MCF 10A (cell line): ENCODE measurements at regions of chr12 and their contacts with region 1.

Region 1: DNA sequence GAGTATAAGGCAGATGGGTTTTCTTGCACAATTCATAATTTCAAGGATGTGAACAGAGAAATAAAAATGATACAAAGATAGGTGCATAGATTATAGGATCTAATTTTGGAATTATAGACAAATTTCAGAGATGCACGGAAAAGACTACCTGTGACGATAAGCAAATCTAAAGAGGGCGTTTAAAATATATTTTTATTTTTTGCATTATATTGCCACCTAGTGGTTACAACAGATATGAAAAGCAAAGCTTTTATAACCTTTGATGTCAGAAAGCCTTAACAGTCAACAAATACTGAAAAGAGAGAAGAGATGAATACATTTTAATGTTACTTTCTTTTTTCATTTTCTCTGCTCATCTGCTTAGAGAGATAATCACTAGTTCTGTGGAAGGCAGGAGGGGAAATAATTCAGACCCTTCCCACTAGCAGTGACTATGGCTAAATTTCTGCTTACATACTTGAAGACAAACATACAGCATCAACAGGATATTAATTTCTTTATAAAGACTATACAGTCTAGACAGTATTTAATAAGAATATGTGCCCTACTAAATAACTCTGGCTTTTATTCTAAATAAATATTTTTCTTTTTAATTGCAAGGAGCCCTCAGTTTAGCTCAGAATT is 46.3 kb downstream of the NTS start:
- DNase-seq: peak; percentile 39
- H3K4me3 Mint-ChIP-seq: no peak overlapping the region
- H3K27ac Mint-ChIP-seq: no peak overlapping the region
- H3K4me1 Mint-ChIP-seq: no peaks in the 10 kb centered on the region
- H3K27me3 Mint-ChIP-seq: no peaks in the 10 kb centered on the region
- CTCF ChIP-seq: peak; percentile 50

Region 2: DNA sequence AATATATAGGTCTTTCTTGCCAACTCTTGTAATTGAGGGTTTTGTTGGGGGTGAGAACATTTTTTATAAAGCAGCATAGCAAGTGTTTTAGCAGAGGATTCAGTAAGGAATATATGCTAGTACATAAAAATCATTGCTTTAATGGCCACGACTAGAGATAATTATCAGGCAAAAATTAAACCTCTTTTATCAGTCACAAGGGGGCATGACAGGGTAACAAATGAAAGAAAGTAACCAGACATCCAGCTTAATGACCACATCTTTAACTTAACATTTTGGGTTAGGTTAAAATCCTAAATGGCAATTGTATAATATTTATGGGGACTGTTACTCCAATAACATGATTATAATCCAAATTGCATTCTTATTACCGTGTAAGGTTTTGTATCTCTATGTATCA is 764.6 kb before region 1 on chr12:
- CTCF ChIA-PET with region 1: no interaction called
- POLR2A ChIA-PET with region 1: no interaction called
- intact Hi-C with region 1: loop called (anchors 5 kb)
- DNase-seq: peak; percentile 60
- H3K4me3 Mint-ChIP-seq: no peak overlapping the region
- H3K27ac Mint-ChIP-seq: no peak overlapping the region
- H3K4me1 Mint-ChIP-seq: no peaks in the 10 kb centered on the region
- H3K27me3 Mint-ChIP-seq: no peaks in the 10 kb centered on the region
- CTCF ChIP-seq: peak; percentile 37

Region 3: GRCh38 chr12:85468356-85469157 is 451.9 kb before region 1 on chr12:
- CTCF ChIA-PET with region 1: interaction called, 36 read pairs
- POLR2A ChIA-PET with region 1: interaction called, 4 read pairs
- intact Hi-C with region 1: loop called (anchors 1 kb)
- DNase-seq: peak; percentile 78
- H3K4me3 Mint-ChIP-seq: peak overlapping the region; percentile 69
- H3K27ac Mint-ChIP-seq: peak overlapping the region; percentile 59
- H3K4me1 Mint-ChIP-seq: peaks cover 21% of the 10 kb centered on the region
- H3K27me3 Mint-ChIP-seq: no peaks in the 10 kb centered on the region
- CTCF ChIP-seq: peak; percentile 85

Region 4: DNA sequence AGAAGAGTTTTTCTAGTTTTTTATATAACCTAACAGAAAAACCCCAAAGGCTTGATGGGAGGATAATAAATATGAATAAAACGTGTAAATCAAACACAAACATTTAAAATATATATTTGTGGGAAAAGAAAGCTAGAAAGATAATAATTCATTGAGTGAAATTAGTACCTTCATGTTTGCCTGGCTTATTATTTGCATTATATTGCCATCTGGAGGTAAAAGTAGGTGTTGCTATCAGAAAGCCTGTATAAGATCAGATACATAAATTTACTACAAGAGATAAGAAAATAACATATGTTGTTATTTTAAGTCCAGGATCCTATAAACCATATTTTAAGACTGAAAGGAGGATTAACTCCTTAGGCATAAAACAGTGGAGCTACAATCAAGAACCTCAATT is 31.4 kb after region 1 on chr12:
- CTCF ChIA-PET with region 1: interaction called, 26 read pairs
- POLR2A ChIA-PET with region 1: no interaction called
- intact Hi-C with region 1: loop called (anchors 1 kb)
- DNase-seq: peak; percentile 24
- H3K4me3 Mint-ChIP-seq: no peak overlapping the region
- H3K27ac Mint-ChIP-seq: no peak overlapping the region
- H3K4me1 Mint-ChIP-seq: no peaks in the 10 kb centered on the region
- H3K27me3 Mint-ChIP-seq: no peaks in the 10 kb centered on the region
- CTCF ChIP-seq: peak; percentile 55